Common myeloid progenitor, CD34-positive (primary cell): ENCODE measurements at regions of chr13 and their contacts with region 1.

Region 1: DNA sequence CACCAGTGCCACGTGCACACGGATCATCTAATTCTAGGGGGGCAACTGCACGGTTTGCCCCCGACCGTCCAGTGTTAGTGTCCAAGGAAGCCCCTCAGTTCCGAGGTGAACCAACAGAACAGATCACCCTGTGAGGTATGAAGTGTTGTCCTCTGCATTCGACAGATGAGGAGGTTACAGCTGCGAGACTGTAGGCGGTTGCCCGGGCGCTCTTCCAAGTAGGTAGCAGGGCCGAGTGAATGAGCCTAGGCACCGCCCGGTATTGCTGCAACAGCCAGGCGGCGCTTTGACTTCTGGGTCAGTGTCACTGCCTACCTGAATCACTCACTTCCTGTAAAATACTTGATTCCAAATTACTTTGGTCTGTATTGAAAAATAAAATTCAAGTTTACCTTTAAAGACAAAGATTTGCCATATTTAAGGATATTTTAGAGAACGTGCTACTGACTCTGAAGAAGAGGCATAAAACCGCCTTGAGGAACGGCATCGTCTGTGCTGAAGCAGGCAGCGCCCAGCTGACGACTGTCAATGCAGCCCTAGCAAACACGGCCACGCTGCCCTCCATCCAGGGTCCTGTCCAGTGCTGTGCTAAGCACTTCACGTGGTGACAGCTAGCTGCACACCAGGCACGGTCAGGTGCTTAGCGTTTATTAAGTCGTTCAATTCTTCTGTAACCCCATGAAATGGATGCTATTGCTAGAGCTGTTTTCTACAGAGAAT is 19.3 kb upstream of the RASA3 start:
- DNase-seq: no peak
- H3K4me3 ChIP-seq: no peak overlapping the region
- H3K27ac ChIP-seq: no peak overlapping the region
- H3K4me1 ChIP-seq: peaks cover 6 to 60% (median 48%) of the 10 kb centered on the region in 4 experiments
- H3K27me3 ChIP-seq: no peaks in the 10 kb centered on the region

Region 2: GRCh38 chr13:114065141-114065925 is 86.4 kb before region 1 on chr13:
- CTCF ChIA-PET with region 1: no interaction called
- POLR2A ChIA-PET with region 1: no interaction called
- DNase-seq: peak; percentile 87 to 95 (median 94)
- H3K4me3 ChIP-seq: peak overlapping the region in 5 of 7 experiments; percentile 13 to 63 (median 40)
- H3K27ac ChIP-seq: peak overlapping the region in 1 of 2 experiments; percentile 64
- H3K4me1 ChIP-seq: peaks cover 15 to 67% (median 56%) of the 10 kb centered on the region in 4 experiments
- H3K27me3 ChIP-seq: no peaks in the 10 kb centered on the region

Region 3: DNA sequence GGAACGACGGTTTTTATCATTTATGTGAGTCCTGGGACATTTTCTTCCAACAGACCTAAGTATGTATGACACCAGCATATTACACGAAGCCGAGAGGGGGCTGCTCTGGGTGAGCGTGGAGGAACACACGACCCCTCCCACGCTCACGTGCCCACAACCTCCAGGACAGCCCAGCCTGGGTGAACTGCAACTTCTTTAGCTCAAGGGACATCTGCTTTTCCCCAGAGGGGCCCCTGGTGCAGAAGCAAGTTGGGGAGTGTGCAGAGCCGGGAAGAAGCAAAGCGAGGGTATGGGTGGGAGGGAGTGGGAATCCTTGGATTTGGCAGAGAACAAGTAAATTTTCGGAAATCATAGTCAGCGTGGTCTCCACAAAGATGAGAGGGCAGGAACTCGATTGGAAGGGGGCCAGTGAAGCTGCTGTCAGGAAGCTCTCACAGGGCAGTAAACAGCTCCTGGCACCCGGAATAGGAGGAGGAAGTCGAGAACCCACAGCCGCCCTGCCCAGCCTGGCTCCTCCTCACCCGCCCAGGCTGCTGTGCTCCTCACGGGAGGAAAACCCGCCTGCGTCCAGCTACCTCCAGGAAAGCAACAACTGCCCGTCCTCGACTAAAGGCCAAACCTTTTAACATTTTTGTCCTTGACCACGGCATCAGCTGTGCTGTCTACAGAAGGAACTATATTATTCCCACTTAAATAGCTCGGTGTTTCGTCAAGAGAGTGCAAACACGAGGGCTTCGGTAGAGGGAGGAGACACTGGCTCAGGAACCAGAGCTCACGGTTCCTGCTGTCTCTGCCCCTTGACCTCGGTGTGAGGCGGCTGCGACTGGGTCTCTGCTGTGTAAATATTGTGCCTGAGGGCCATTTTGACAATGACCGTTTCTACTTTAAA is 10.2 kb after region 1 on chr13:
- CTCF ChIA-PET with region 1: interaction called, 11 read pairs
- POLR2A ChIA-PET with region 1: interaction called, 4 read pairs
- DNase-seq: peak; percentile 50 to 62 (median 50)
- H3K4me3 ChIP-seq: peak overlapping the region in 5 of 7 experiments; percentile 11 to 62 (median 46)
- H3K27ac ChIP-seq: no peak overlapping the region
- H3K4me1 ChIP-seq: peaks cover 3 to 41% (median 38%) of the 10 kb centered on the region in 4 experiments
- H3K27me3 ChIP-seq: no peaks in the 10 kb centered on the region